ENCODE measurements at regions of chr7 and their contacts with region 1.

Region 1: DNA sequence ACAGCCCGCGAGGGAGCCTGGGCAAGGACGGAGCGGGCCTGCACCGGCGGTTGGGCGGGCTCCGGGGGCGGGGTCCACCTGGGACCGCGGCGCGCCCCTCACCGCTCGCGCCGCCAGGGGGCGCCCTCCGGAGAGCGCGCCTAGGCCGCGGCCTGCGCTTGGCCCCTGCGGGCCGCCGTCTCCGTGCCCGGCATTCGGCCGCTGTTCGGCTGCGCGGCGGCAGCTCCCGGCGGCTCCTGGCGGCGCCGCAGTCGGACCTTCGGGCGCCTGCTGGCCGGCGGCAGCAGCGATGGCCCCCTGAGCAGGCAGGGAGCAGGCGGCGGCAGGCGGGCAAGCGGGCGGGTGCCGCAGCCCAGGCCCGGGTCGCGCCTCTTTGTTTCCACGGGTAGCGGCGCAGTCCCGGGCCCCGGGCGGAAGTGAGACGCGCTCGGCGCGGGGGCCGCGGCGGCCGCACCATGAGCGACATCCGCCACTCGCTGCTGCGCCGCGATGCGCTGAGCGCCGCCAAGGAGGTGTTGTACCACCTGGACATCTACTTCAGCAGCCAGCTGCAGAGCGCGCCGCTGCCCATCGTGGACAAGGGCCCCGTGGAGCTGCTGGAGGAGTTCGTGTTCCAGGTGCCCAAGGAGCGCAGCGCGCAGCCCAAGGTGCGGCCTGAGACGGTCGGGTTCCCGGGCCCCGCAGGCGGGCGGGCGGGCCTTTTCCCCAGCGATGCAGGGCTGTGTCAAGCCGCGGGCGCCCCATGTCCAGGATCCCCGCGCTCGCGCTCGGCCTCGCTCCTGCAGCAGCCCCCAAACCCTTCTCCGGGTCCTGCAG is at the start of gene INTS15:
- DNase-seq: peak; percentile 81
- H3K4me3 ChIP-seq: peak within 1 kb of the TSS; percentile 72 to 97 (median 87)
- H3K27ac ChIP-seq: peak within 1 kb of the TSS; percentile 85 to 93 (median 87)
- H3K4me1 ChIP-seq: peaks cover 0 to 22% (median 18%) of the 10 kb centered on the region in 4 donors
- H3K27me3 ChIP-seq: no peaks in the 10 kb centered on the region
- CTCF ChIP-seq: peak in 2 of 4 experiments; percentile 6 to 78
- EP300 ChIP-seq: no peak
- POLR2A ChIP-seq: no peak
- total RNA-seq, gene INTS15: 16.3 to 30.2 (median 23.1) TPM

Region 2: DNA sequence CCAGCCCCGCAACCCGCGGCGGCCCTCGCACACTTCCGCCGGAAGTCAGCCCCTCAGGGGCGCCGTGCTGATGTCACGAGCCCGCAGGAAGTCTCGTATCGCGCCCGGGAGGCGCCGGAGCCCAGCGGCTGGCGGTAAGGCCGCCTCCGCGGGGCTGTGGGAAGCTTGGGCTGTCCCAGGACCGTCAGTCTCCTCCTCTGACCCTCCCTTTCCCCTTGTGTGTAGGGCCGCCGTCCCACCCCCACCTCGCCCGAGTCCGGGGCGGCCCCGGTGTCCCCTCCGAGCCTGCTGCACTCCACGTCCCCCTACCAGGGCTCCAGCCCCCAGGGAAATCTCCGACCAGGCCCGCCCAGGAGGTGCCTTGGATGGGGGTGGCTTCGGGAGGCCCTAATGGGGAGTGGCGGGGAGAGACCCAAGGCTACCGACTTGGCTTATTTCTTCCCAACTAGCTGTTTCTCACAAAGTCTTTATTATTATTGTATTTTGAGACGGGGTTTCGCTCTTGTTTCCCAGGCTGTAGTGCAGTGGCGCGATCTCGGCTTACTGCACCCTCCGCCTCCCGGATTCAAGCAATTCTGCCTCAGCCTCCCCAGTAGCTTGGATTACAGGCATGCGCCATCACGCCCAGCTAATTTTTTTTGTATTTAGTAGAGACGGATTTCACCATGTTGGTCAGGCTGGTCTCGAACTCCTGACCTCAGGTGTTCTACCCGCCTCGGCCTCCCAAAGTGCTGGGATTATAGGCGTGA is 12.5 kb before region 1 on chr7 and contains the start of gene ZDHHC4:
- intact Hi-C with region 1: loop called (anchors 1 kb)
- DNase-seq: peak; percentile 93
- H3K4me3 ChIP-seq: peak within 1 kb of the TSS; percentile 67 to 77 (median 72)
- H3K27ac ChIP-seq: peak within 1 kb of the TSS; percentile 93 to 97 (median 95)
- H3K4me1 ChIP-seq: peaks cover 0 to 11% (median 6%) of the 10 kb centered on the region in 4 donors
- H3K27me3 ChIP-seq: no peaks in the 10 kb centered on the region
- CTCF ChIP-seq: no peak
- EP300 ChIP-seq: peak in 1 of 4 donors; percentile 6
- POLR2A ChIP-seq: peak; percentile 93 to 94
- total RNA-seq, gene ZDHHC4: 51.0 to 73.6 (median 61.8) TPM

Region 3: DNA sequence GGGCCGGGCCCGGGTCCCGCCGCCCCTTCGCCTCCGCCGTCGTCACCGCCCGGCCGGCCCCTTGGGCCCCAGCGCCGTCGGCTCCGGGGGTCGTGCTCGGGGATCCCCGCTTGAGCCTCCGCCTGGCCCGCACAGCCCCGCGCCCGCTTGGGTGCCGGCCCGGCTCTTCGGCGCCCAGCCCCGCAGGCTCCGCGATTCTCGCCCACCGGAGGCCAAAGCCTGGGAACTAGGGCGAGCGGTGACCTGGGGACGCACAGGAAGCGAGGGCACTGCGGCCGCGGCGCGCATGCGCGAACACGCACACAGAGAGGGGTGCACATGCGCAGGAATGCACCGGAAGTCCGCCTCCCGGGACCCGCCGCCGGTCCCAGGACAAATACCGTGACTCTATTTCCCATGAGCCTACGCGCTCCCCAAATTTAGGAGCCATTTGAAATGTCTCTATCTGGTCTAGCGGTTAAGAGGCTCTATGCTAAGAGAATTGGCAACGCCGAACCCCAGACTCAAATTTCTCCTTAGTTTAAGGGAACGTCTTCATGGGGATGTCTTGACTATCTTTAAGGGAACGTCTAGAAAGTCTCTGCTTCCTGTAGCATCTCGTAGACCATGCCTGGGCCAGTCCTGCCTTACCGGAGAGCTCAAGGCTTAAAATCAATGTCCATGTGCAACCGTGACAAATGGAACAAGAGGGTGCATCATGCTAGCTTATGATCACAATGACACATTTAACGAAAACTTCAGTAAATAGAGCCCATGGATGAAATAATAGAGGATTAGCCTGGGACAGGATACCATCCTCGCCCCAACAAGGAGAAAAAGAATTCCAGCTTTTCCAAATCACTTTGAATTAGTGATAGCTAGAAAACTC is 116.9 kb after region 1 on chr7 and contains the start of gene ZNF12:
- intact Hi-C with region 1: loop called (anchors 5 kb)
- DNase-seq: peak; percentile 99
- H3K4me3 ChIP-seq: peak within 1 kb of the TSS; percentile 90 to 100 (median 95)
- H3K27ac ChIP-seq: peak within 1 kb of the TSS; percentile 81 to 96 (median 86)
- H3K4me1 ChIP-seq: peaks cover 0 to 35% (median 25%) of the 10 kb centered on the region in 4 donors
- H3K27me3 ChIP-seq: no peaks in the 10 kb centered on the region
- CTCF ChIP-seq: no peak
- EP300 ChIP-seq: peak in 1 of 4 donors; percentile 52
- POLR2A ChIP-seq: peak; percentile 30 to 38
- total RNA-seq, gene ZNF12: 17.2 to 27.1 (median 22.9) TPM

Measured in sigmoid colon (tissue), 7 donors.